ENCODE measurements at regions of chr14 and their contacts with region 1.

Region 1: DNA sequence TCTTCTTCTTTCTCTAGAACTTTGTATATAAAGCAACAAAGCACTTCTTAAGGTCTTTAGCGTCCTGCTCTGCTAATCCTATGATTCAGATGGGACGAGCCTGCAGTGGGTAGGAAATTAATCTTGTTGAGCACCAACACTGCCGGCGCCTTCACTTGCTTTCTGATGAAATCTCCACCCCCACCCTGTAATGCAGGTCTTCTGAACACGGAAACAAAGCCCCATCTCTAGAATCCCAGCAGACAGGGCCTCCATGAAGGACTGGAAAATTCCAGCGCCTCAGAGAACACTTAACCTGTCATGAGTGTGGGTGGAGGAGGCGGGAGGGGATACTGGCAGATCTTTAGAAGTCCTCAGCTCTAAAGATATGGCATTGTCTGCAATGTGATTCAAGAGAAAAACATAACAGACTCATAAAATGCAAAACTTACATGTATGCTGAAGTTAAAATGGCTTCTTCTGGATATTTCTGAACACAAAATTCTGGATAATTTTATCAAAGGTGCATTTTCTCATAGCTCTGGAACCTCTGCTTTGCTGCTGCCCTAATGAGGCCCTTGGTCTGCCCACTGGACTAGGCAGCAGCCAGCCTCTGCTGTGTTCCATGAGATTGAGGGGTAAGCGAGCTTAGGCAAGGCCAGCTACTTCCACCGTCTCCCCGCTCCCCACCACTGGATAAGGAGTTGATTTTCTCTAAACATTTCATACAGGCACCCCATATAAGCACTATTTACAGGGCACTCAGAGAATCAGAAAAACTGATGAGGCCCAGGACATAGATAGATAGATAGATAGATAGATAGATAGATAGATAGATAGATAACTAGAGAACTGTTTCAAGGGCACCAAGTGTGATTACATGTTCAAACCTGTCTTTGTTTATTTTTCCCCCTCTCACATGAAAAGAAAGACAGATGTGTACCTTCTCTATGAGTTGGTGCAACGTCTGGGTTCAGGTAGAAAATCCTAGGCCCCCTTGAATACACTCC is 43.1 kb downstream of the ZFP36L1 start:
- DNase-seq: peak; percentile 75
- H3K4me3 ChIP-seq: no peak overlapping the region
- H3K27ac ChIP-seq: peak overlapping the region in 3 of 4 donors; percentile 22 to 65 (median 61)
- H3K4me1 ChIP-seq: peaks cover 0 to 60% (median 36%) of the 10 kb centered on the region in 4 donors
- H3K27me3 ChIP-seq: no peaks in the 10 kb centered on the region
- CTCF ChIP-seq: no peak
- EP300 ChIP-seq: no peak
- POLR2A ChIP-seq: no peak

Region 2: DNA sequence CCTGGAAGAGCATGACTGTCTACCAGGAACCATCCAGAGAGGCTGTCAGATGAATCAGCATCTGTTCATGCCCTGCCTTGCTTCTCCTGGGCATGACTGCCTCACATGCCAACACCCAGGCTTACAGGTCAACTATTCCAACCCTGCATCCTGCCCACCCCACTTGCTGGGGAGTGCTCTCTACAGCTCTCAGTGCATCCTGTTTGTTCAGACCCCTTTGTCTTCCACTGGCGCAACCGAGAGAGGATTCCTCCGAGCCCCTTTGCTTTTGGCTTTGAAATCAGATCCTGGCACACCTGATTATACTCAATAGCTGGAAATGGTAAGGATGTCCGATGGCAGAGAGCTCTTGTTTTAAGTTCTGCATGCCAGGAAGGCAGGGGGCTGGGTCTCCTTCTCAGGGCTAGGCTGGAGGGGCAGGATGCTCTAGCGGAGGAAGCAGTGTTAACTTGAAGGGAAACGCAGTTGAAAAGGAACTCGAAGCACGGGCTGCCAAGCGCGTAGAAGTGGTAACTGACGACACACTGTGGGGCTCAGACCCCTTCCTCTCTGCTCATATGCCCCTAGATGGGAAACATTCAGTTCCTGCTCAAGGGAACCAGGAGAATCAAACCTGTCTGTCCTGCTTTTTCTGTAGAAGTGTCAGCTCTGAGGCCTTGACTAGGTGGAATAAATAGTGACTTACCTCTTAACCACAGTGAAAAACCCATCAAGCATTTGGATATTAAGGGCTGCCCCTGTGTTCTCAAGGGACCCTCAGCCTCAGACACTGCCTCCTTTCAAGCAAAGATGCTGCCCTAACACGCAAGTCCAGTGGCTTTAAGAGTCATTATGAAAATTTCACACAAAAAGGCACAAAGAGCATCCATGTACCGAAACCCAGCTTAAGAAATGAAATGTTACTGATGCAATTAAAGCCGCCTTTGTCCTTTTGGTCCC is 254.4 kb before region 1 on chr14:
- intact Hi-C with region 1: no loop called
- DNase-seq: no peak
- H3K4me3 ChIP-seq: no peak overlapping the region
- H3K27ac ChIP-seq: no peak overlapping the region
- H3K4me1 ChIP-seq: no peaks in the 10 kb centered on the region
- H3K27me3 ChIP-seq: no peaks in the 10 kb centered on the region
- CTCF ChIP-seq: no peak
- EP300 ChIP-seq: no peak
- POLR2A ChIP-seq: no peak

Region 3: DNA sequence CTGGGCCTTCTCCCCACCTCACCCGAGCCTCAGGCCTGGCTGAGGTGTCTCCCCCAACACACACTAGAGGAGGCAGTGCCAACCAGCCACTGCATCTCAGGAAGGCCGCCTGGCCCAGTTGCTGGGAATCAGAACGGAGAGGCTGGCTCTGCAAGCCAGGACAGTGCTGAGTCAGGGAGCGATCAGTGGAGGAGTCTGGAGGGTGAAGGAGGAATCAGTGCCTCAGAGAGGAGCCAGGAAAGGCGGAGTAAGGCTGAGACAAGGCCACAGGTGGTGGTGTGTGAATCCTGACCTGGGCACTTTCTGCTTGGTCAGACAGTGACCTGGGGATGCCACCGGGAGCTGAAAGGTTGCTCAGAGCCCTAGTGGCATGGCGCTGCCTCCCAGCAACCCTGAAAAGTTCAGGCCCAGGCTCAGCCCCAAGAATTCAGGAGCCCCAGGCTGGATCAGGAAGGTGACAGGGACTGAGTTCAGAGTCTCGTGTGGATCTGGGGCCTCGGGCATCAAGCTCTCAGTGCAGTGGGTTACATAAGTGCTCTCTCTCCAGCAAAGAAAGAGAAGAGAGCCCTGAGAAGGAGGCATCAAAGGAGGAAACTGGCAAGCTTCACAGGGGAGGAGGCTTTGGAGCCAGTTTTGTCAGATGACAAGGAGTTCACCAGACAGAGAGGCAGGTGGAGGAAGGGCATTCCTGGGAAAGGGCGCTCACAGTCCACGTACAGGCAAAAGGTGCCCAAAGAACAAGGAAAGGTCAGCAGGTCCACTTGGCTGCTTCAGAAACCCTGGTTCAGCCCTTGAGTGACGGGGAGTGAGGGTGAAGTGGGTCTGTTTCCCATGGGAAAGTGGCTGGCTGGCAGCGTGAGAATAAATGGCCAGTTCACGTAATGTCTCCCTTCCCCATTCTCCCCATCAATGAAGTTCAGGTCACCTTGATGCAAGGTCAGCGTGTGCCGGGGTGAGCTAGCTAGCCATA is 44.8 kb before region 1 on chr14:
- intact Hi-C with region 1: loop called (anchors 5 kb)
- DNase-seq: peak; percentile 67
- H3K4me3 ChIP-seq: no peak overlapping the region
- H3K27ac ChIP-seq: no peak overlapping the region
- H3K4me1 ChIP-seq: peaks cover 0 to 22% (median 7%) of the 10 kb centered on the region in 4 donors
- H3K27me3 ChIP-seq: no peaks in the 10 kb centered on the region
- CTCF ChIP-seq: no peak
- EP300 ChIP-seq: no peak
- POLR2A ChIP-seq: no peak

Measured in sigmoid colon (tissue), 7 donors.